Right ventricle myocardium inferior (tissue), 1 donor: ENCODE measurements at regions of chr2 and their contacts with region 1.

Region 1: DNA sequence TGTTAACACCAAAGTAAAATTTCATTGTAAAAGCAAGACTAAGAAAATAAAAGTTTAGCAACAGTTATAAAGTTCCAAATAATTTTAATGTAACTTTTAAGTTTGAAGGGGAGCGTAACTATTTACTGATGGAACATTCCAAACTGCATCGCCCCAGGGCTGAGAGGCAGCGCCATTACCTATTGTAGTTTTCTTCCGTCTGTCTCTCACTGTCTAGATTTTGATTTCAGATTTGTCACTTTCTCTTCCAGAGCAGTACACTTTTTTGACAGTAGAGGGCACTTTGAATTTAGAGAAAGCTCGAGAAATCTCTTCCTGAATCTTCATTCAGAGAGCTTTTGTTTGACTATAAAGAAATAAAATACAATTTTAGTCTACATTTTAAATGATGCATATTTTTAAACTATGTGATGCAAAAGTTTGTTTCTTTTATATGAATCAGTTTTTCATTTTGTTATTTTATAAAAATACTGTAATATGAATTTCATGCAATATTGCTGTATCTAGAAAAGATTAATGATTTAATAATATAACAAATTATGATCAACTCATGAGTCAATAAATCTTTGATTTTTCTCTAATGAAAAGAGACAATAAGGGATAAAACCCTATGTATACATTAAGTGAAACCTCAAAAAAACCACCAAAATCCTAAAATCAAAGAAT is 389.8 kb downstream of the FIGN start:
- DNase-seq: no peak
- ATAC-seq: no peak

Region 2: GRCh38 chr2:163236553-163236952 is 109.5 kb before region 1 on chr2:
- intact Hi-C with region 1: no loop called
- DNase-seq: no peak
- ATAC-seq: no peak

Region 3: GRCh38 chr2:163471947-163472346 is 125.9 kb after region 1 on chr2:
- intact Hi-C with region 1: loop called (anchors 5 kb)
- DNase-seq: no peak
- ATAC-seq: peak; percentile 62

Region 4: DNA sequence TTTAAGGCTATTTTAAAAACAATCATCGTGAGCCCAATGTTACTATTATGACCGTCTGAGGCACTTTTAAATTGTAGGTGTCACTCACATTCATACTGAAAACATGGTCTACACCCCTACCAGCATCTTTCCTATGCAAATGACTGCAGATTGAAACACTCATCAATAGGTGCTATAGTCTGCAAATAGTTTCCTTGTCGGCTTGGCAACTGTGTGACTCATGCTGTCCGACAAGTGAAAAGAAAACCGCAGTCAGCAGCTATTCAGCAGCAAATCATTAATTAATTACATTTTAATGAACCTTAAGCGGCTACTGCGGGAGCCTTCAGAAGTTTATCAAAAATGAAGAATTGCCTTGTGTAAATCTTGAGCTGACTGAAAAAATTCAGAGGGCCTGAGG is 255.3 kb after region 1 on chr2:
- intact Hi-C with region 1: loop called (anchors 10 kb)
- DNase-seq: no peak
- ATAC-seq: no peak

Region 5: DNA sequence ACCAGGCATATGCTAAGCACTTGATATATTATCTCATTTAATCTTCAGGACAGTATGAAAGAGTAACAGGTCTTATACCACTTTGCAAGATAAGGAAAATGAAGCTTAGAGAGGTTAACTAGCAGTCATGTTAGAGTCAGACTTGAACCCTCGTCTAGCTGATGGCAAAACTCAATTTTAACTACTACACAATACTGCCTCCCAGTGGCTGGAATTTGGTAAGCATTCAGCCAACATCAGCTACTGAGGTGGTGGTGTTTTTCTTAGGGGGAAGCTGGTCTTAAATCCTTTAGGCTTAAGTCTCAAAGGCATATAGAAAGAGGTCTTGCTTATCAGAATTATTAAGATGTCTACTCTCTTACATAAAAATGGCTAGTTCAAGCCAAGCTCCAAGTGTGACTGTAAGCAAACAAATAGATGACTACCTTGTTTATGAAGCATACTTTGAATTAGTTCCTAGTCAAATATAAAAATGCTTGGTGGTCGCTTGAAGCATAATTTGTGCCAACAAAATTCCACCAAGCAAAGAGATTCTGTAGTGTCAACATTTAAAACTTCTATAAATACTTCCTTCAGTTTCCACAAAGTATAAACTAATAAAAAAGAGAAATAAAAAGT is 715.2 kb after region 1 on chr2:
- intact Hi-C with region 1: loop called (anchors 5 kb)
- DNase-seq: no peak
- ATAC-seq: no peak

Region 6: DNA sequence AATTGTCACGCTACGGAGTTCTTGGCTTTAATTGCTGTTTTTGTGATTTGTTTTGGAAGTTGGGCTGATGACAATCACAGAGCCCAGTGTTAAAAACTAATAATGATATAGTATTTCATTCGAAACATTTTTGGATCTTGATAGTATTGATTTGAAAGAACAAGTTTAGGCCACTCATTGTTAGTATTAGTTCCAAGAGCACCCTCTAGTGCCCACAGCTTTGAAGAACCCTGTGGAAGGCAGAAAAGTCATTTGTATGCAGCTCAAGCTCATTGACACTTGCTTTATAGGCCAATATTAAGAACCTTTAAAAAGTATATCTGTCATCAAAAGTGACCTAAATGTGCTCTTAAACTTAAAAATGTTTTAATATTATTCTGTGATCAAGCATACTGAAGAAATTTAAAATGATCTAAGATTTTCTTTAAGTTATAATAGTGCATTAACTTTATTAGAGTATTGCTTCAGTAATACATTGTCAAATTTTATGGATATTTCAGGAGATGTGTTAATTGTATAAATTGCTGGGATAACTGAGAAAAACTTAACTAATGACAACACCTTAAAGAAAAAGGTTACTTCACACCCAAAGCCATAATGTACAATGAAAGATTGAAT is 1084.2 kb after region 1 on chr2:
- intact Hi-C with region 1: loop called (anchors 5 kb)
- DNase-seq: no peak
- ATAC-seq: no peak